B cell (primary cell): ENCODE measurements at regions of chr5 and their contacts with region 1.

Region 1: GRCh38 chr5:158751961-158752655 is 347.6 kb downstream of the EBF1 start:
- DNase-seq: peak; percentile 79
- ATAC-seq: peak; percentile 80
- H3K4me3 ChIP-seq: peak overlapping the region; percentile 23 to 62 (median 34)
- H3K4me3 Mint-ChIP-seq: peak overlapping the region; percentile 87
- H3K27ac ChIP-seq: peak overlapping the region; percentile 78 to 81
- H3K27ac Mint-ChIP-seq: peak overlapping the region; percentile 67
- H3K4me1 ChIP-seq: peaks cover 60 to 70% of the 10 kb centered on the region in 2 donors
- H3K4me1 Mint-ChIP-seq: peaks cover 91% of the 10 kb centered on the region
- H3K27me3 ChIP-seq: no peaks in the 10 kb centered on the region
- H3K27me3 Mint-ChIP-seq: no peaks in the 10 kb centered on the region
- CTCF ChIP-seq: no peak

Region 2: GRCh38 chr5:158770506-158770905 is 18.4 kb after region 1 on chr5:
- CTCF ChIA-PET with region 1: interaction called, 3 read pairs
- POLR2A ChIA-PET with region 1: no interaction called
- intact Hi-C with region 1: loop called (anchors 1 kb)
- DNase-seq: peak; percentile 34
- ATAC-seq: no peak
- H3K4me3 ChIP-seq: peak overlapping the region in 1 of 5 experiments; percentile 4
- H3K4me3 Mint-ChIP-seq: peak overlapping the region; percentile 29
- H3K27ac ChIP-seq: peak overlapping the region in 1 of 2 donors; percentile 15
- H3K27ac Mint-ChIP-seq: peak overlapping the region; percentile 12
- H3K4me1 ChIP-seq: peaks cover 71 to 79% of the 10 kb centered on the region in 2 donors
- H3K4me1 Mint-ChIP-seq: peaks cover 89% of the 10 kb centered on the region
- H3K27me3 ChIP-seq: no peaks in the 10 kb centered on the region
- H3K27me3 Mint-ChIP-seq: no peaks in the 10 kb centered on the region
- CTCF ChIP-seq: no peak

Region 3: GRCh38 chr5:158819840-158820620 is 67.9 kb after region 1 on chr5:
- CTCF ChIA-PET with region 1: no interaction called
- POLR2A ChIA-PET with region 1: no interaction called
- intact Hi-C with region 1: loop called (anchors 2 kb)
- DNase-seq: peak; percentile 55
- ATAC-seq: peak; percentile 56
- H3K4me3 ChIP-seq: peak overlapping the region; percentile 2 to 50 (median 19)
- H3K4me3 Mint-ChIP-seq: peak overlapping the region; percentile 82
- H3K27ac ChIP-seq: peak overlapping the region; percentile 82 to 87
- H3K27ac Mint-ChIP-seq: peak overlapping the region; percentile 80
- H3K4me1 ChIP-seq: peaks cover 98 to 99% of the 10 kb centered on the region in 2 donors
- H3K4me1 Mint-ChIP-seq: peaks cover 97% of the 10 kb centered on the region
- H3K27me3 ChIP-seq: no peaks in the 10 kb centered on the region
- H3K27me3 Mint-ChIP-seq: no peaks in the 10 kb centered on the region
- CTCF ChIP-seq: no peak

Region 4: GRCh38 chr5:159049844-159050315 is 297.8 kb after region 1 on chr5:
- CTCF ChIA-PET with region 1: no interaction called
- POLR2A ChIA-PET with region 1: no interaction called
- intact Hi-C with region 1: loop called (anchors 5 kb)
- DNase-seq: peak; percentile 57
- ATAC-seq: no peak
- H3K4me3 ChIP-seq: peak overlapping the region in 3 of 5 experiments; percentile 16 to 28 (median 17)
- H3K4me3 Mint-ChIP-seq: peak overlapping the region; percentile 91
- H3K27ac ChIP-seq: peak overlapping the region; percentile 74 to 80
- H3K27ac Mint-ChIP-seq: peak overlapping the region; percentile 92
- H3K4me1 ChIP-seq: peaks cover 65 to 68% of the 10 kb centered on the region in 2 donors
- H3K4me1 Mint-ChIP-seq: peaks cover 95% of the 10 kb centered on the region
- H3K27me3 ChIP-seq: no peaks in the 10 kb centered on the region
- H3K27me3 Mint-ChIP-seq: no peaks in the 10 kb centered on the region
- CTCF ChIP-seq: peak; percentile 61